Endothelial cell of umbilical vein (primary cell): ENCODE measurements at regions of chr1 and their contacts with region 1.

Region 1: GRCh38 chr1:234722904-234723720 is 113.1 kb upstream of the IRF2BP2 start:
- DNase-seq: peak; percentile 21
- H3K4me3 ChIP-seq: peak overlapping the region in 1 of 3 experiments; percentile 8
- H3K27ac ChIP-seq: peak overlapping the region; percentile 91
- H3K4me1 ChIP-seq: peaks cover 82% of the 10 kb centered on the region
- H3K27me3 ChIP-seq: no peaks in the 10 kb centered on the region
- CTCF ChIP-seq: no peak
- POLR2A ChIP-seq: no peak

Region 2: DNA sequence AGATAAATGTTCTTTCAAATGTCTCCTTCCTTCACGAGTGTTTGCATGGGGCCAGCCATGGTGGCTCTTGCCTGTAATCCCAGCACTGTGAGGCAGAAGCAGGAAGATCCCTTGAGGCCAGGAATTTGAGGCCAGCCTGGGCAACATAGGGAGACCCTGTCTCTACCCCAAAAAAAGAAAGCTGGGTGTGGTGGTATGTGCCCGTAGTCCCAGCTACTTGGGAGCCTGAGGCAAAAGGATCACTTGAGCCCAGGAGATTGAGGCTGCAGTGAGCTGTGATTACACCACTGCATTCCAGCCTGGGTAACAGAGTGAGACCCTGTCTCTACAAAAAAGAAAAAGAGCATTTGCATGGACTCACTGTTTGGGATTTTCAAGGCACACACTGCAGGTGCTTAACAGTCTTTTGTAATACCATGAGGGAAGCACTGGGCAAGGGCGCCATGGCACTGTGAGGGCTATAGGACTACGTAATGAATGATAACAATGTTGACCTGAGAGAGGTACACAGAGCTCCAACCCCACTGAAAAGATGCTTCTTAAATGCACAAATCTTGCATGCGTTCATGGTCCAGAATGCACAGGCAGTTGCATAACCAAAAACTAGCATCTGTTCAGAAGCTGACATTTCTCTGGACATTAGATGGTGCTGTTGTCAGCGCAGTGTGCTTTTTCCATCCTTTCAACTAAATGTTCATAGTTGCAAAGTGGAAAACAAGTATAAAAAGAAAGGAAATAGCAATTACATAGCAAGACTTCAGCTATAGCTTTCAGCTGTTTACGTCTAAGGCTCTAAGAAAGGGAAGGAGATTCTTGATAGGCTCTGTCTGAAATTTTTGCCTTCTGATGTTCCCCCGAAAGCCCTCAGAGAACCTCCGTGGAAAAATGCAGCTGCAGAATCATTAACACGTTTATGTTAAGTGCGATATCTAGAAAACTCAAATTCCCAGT is 236.3 kb before region 1 on chr1:
- CTCF ChIA-PET with region 1: interaction called, 10 read pairs
- POLR2A ChIA-PET with region 1: interaction called, 3 read pairs
- dilution Hi-C with region 1: no loop called
- intact Hi-C with region 1: no loop called
- DNase-seq: peak; percentile 84
- H3K4me3 ChIP-seq: no peak overlapping the region
- H3K27ac ChIP-seq: no peak overlapping the region
- H3K4me1 ChIP-seq: peaks cover 7% of the 10 kb centered on the region
- H3K27me3 ChIP-seq: peaks cover 10 to 12% of the 10 kb centered on the region in 2 experiments
- CTCF ChIP-seq: peak; percentile 54 to 55
- POLR2A ChIP-seq: no peak

Region 3: DNA sequence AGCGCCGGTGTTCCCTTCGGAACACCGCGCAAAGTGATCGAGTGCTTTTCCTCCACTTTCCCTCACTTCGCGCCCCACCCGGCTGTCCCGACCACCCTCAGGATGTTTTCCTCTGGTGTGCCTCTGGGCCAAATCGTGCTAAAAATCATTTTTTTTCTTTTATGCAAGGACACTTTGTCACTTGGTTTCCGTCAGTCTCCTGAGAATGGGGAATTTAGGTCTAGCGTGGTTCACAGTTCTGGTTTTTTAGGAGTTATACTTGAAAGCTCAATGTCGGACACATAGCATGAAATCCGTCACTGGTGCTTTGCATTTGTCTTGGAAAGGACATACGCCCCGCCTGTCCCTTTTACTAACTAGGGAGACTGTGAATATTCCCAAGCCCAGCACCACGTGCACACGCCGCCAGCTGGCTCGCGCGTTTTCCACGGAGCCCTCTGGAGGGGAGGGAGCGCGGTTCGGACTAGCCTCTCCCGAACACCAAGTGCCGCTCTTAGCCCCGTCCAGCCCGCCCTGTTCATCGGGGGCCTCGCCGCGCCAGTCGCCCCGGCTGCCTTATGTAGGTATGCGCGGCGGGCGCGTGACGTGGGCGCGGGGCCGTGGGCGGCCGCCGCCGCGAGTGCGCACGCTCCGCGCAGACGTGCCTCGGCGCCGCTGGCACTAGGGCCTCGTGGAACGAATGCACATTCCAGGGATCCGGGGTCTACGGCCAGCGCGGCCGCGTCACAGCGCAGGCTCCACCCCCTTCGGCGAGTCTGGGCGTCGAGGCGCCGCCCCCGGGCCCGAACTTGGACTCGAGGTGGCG is 112.6 kb before region 1 on chr1:
- CTCF ChIA-PET with region 1: interaction called, 51 read pairs
- POLR2A ChIA-PET with region 1: interaction called, 48 read pairs
- dilution Hi-C with region 1: no loop called
- intact Hi-C with region 1: loop called (anchors 1 kb)
- DNase-seq: peak; percentile 95
- H3K4me3 ChIP-seq: peak overlapping the region; percentile 17 to 78 (median 57)
- H3K27ac ChIP-seq: peak overlapping the region; percentile 99
- H3K4me1 ChIP-seq: peaks cover 37% of the 10 kb centered on the region
- H3K27me3 ChIP-seq: no peaks in the 10 kb centered on the region
- CTCF ChIP-seq: peak in 1 of 2 donors; percentile 14
- POLR2A ChIP-seq: peak; percentile 10

Region 4: GRCh38 chr1:234772345-234773147 is 49.4 kb after region 1 on chr1:
- CTCF ChIA-PET with region 1: interaction called, 3 read pairs
- POLR2A ChIA-PET with region 1: no interaction called
- dilution Hi-C with region 1: no loop called
- intact Hi-C with region 1: loop called (anchors 1 kb)
- DNase-seq: peak; percentile 91
- H3K4me3 ChIP-seq: no peak overlapping the region
- H3K27ac ChIP-seq: peak overlapping the region; percentile 89
- H3K4me1 ChIP-seq: peaks cover 12% of the 10 kb centered on the region
- H3K27me3 ChIP-seq: peaks cover 2% of the 10 kb centered on the region in 2 experiments
- CTCF ChIP-seq: no peak
- POLR2A ChIP-seq: peak; percentile 62

Region 5: GRCh38 chr1:234918181-234918841 is 195.2 kb after region 1 on chr1:
- CTCF ChIA-PET with region 1: interaction called, 5 read pairs
- POLR2A ChIA-PET with region 1: interaction called, 8 read pairs
- dilution Hi-C with region 1: no loop called
- intact Hi-C with region 1: loop called (anchors 1 kb)
- DNase-seq: peak; percentile 99
- H3K4me3 ChIP-seq: no peak overlapping the region
- H3K27ac ChIP-seq: peak overlapping the region; percentile 95
- H3K4me1 ChIP-seq: peaks cover 40% of the 10 kb centered on the region
- H3K27me3 ChIP-seq: no peaks in the 10 kb centered on the region
- CTCF ChIP-seq: no peak
- POLR2A ChIP-seq: peak; percentile 77

Region 6: GRCh38 chr1:234987415-234988154 is 264.5 kb after region 1 on chr1:
- CTCF ChIA-PET with region 1: interaction called, 6 read pairs
- POLR2A ChIA-PET with region 1: no interaction called
- dilution Hi-C with region 1: no loop called
- intact Hi-C with region 1: loop called (anchors 1 kb)
- DNase-seq: peak; percentile 98
- H3K4me3 ChIP-seq: no peak overlapping the region
- H3K27ac ChIP-seq: peak overlapping the region; percentile 100
- H3K4me1 ChIP-seq: peaks cover 47% of the 10 kb centered on the region
- H3K27me3 ChIP-seq: no peaks in the 10 kb centered on the region
- CTCF ChIP-seq: no peak
- POLR2A ChIP-seq: no peak

Region 7: DNA sequence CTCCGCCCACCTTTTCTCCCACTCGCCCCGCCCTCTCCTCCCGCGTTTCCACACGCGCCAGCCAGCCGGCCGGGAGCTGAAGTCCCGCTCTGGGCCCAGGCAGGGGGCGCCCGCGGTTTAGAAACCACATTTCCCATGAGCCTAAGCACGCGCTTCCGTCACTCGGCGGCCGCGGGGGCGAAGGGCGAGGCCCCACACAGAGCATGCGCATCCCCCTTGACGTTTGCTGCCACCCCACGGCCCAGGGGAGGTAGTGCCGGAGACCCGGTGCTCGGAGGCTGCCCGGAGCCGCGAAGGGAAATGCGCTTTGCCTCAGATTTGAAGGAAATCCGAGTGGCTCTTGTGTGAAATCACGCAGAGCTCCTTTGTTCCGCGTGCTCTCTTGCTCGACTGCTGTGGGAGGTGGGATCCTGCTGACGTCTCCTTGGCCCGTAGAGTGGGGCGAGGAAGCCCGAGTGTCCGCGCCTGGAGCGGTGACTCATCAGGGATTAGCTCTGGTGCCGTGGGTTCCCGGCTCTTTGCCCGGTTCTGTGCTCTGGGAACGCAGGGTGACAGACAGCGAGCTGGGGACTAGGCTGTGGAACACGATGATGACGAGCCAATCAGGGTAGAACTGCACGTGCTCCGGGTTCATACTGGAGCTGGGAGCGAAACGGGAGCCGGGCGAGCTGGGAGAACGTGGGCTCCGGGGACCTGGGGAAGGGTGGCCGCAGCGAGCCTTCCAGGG is 781.5 kb after region 1 on chr1:
- CTCF ChIA-PET with region 1: no interaction called
- POLR2A ChIA-PET with region 1: no interaction called
- dilution Hi-C with region 1: no loop called
- intact Hi-C with region 1: loop called (anchors 1 kb)
- DNase-seq: peak; percentile 100
- H3K4me3 ChIP-seq: peak overlapping the region; percentile 14 to 80 (median 41)
- H3K27ac ChIP-seq: peak overlapping the region; percentile 71
- H3K4me1 ChIP-seq: peaks cover 9% of the 10 kb centered on the region
- H3K27me3 ChIP-seq: no peaks in the 10 kb centered on the region
- CTCF ChIP-seq: peak; percentile 87 to 92
- POLR2A ChIP-seq: peak; percentile 53